CD4-positive, alpha-beta memory T cell (primary cell): ENCODE measurements at regions of chr11 and their contacts with region 1.

Region 1: GRCh38 chr11:6377902-6378639 is 12.2 kb upstream of the SMPD1 start:
- DNase-seq: no peak
- H3K4me3 ChIP-seq: no peak overlapping the region
- H3K4me3 Mint-ChIP-seq: peak overlapping the region in 5 of 8 donors; percentile 22 to 68 (median 60)
- H3K27ac ChIP-seq: no peak overlapping the region
- H3K27ac Mint-ChIP-seq: peak overlapping the region; percentile 28 to 90 (median 79)
- H3K4me1 ChIP-seq: peaks cover 17% of the 10 kb centered on the region
- H3K4me1 Mint-ChIP-seq: peaks cover 14 to 29% (median 23%) of the 10 kb centered on the region in 4 donors
- H3K27me3 ChIP-seq: no peaks in the 10 kb centered on the region
- H3K27me3 Mint-ChIP-seq: no peaks in the 10 kb centered on the region

Region 2: DNA sequence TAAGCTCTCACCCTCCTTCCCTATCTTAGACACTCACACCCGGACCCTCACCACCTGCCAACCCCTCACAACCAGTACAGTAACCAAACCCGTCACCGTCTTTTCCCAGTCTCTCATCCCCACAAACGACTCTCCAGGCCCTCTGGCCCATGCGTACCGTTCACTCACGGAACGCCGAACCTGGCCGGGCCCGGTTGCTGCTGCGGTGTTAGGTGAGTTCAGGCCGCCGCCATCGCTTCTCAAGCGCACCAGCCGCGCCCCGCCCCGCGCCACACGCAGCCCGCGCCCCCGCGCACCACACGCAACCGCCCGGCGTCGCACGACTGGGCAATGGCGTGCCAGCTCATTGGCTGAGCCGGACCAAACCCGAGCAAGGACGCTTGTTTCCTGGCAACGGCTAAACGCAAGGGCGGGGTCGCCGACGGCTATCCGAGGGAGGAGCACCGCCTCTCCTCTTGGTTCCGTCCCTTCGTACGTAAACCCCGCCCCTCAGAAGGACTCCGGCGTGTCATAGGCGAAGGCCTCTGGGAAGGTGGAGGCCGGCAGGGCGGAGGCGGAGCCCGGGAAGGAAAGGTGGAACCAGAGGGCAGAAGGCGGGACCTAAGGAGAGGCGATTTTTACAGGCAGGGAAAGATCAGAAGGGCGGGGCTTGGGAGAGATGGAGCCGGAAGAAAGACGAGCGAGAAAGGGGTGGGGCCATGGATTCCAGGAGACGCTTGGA is 143.5 kb before region 1 on chr11 and contains the start of gene FHIP1B:
- CTCF ChIA-PET with region 1: no interaction called
- POLR2A ChIA-PET with region 1: no interaction called
- intact Hi-C with region 1: no loop called
- DNase-seq: peak; percentile 99 to 100 (median 100)
- H3K4me3 ChIP-seq: peak within 1 kb of the TSS; percentile 80 to 86
- H3K4me3 Mint-ChIP-seq: peak within 1 kb of the TSS; percentile 96 to 100 (median 98)
- H3K27ac ChIP-seq: peak within 1 kb of the TSS; percentile 75
- H3K27ac Mint-ChIP-seq: peak within 1 kb of the TSS; percentile 87 to 100 (median 99)
- H3K4me1 ChIP-seq: peaks cover 32% of the 10 kb centered on the region
- H3K4me1 Mint-ChIP-seq: peaks cover 27 to 51% (median 42%) of the 10 kb centered on the region in 4 donors
- H3K27me3 ChIP-seq: no peaks in the 10 kb centered on the region
- H3K27me3 Mint-ChIP-seq: peaks cover 0 to 2% of the 10 kb centered on the region in 2 donors
- total RNA-seq, gene FHIP1B: 48.7 to 50.8 TPM

Region 3: GRCh38 chr11:6269994-6270393 is 108.1 kb before region 1 on chr11:
- CTCF ChIA-PET with region 1: no interaction called
- POLR2A ChIA-PET with region 1: no interaction called
- intact Hi-C with region 1: no loop called
- DNase-seq: no peak
- H3K4me3 ChIP-seq: no peak overlapping the region
- H3K4me3 Mint-ChIP-seq: no peak overlapping the region
- H3K27ac ChIP-seq: no peak overlapping the region
- H3K27ac Mint-ChIP-seq: no peak overlapping the region
- H3K4me1 ChIP-seq: no peaks in the 10 kb centered on the region
- H3K4me1 Mint-ChIP-seq: no peaks in the 10 kb centered on the region
- H3K27me3 ChIP-seq: no peaks in the 10 kb centered on the region
- H3K27me3 Mint-ChIP-seq: peaks cover 25 to 26% of the 10 kb centered on the region in 2 donors

Region 4: DNA sequence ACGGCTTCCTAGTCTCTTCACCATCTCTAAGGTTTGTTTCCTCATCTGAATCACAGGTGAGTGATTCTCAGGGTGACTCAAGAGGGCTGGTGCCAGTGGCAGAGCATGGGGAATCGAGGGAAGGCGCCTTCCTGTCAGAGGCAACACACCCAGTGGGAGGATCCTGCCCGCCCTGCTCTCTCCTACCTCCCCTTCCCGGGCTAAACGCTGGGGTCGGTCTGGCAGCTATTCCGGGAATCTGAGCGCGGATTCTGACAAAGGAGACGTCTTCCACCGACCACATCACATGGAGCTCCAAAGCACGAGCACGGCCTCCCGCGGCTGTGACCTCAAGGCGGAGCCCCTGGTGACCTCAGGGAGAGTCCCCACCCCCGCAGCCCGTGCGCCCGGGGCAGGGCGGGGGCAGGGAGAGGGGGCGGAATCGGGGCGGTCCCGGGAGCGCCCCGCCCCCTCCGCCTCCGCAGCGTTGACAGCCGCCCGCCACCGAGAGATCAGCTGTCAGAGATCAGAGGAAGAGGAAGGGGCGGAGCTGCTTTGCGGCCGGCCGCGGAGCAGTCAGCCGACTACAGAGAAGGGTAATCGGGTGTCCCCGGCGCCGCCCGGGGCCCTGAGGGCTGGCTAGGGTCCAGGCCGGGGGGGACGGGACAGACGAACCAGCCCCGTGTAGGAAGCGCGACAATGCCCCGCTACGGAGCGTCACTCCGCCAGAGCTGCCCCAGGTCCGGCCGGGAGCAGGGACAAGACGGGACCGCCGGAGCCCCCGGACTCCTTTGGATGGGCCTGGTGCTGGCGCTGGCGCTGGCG is 12.1 kb after region 1 on chr11 and contains the start of gene SMPD1:
- CTCF ChIA-PET with region 1: interaction called, 61 read pairs
- POLR2A ChIA-PET with region 1: interaction called, 18 read pairs
- intact Hi-C with region 1: no loop called
- DNase-seq: peak; percentile 91 to 96 (median 92)
- H3K4me3 ChIP-seq: peak within 1 kb of the TSS; percentile 79 to 97
- H3K4me3 Mint-ChIP-seq: peak within 1 kb of the TSS; percentile 93 to 98 (median 95)
- H3K27ac ChIP-seq: peak within 1 kb of the TSS; percentile 83
- H3K27ac Mint-ChIP-seq: peak within 1 kb of the TSS; percentile 98 to 100 (median 99)
- H3K4me1 ChIP-seq: peaks cover 50% of the 10 kb centered on the region
- H3K4me1 Mint-ChIP-seq: peaks cover 24 to 61% (median 44%) of the 10 kb centered on the region in 4 donors
- H3K27me3 ChIP-seq: no peaks in the 10 kb centered on the region
- H3K27me3 Mint-ChIP-seq: no peaks in the 10 kb centered on the region
- total RNA-seq, gene SMPD1: 39.3 to 43.6 TPM

Region 5: GRCh38 chr11:6431861-6432260 is 53.8 kb after region 1 on chr11:
- CTCF ChIA-PET with region 1: interaction called, 1,014 read pairs
- POLR2A ChIA-PET with region 1: interaction called, 6 read pairs
- intact Hi-C with region 1: no loop called
- DNase-seq: no peak
- H3K4me3 ChIP-seq: no peak overlapping the region
- H3K4me3 Mint-ChIP-seq: no peak overlapping the region
- H3K27ac ChIP-seq: no peak overlapping the region
- H3K27ac Mint-ChIP-seq: no peak overlapping the region
- H3K4me1 ChIP-seq: peaks cover under 1% of the 10 kb centered on the region
- H3K4me1 Mint-ChIP-seq: no peaks in the 10 kb centered on the region
- H3K27me3 ChIP-seq: no peaks in the 10 kb centered on the region
- H3K27me3 Mint-ChIP-seq: no peaks in the 10 kb centered on the region

Region 6: GRCh38 chr11:6473481-6474422 is 95.7 kb after region 1 on chr11 and contains the start of gene TRIM3:
- CTCF ChIA-PET with region 1: interaction called, 14 read pairs
- POLR2A ChIA-PET with region 1: interaction called, 5 read pairs
- intact Hi-C with region 1: no loop called
- DNase-seq: peak; percentile 41 to 75 (median 53)
- H3K4me3 ChIP-seq: peak within 1 kb of the TSS; percentile 54 to 64
- H3K4me3 Mint-ChIP-seq: peak within 1 kb of the TSS; percentile 88 to 92 (median 89)
- H3K27ac ChIP-seq: peak within 1 kb of the TSS; percentile 60
- H3K27ac Mint-ChIP-seq: peak within 1 kb of the TSS; percentile 86 to 95 (median 92)
- H3K4me1 ChIP-seq: peaks cover 16% of the 10 kb centered on the region
- H3K4me1 Mint-ChIP-seq: peaks cover 10 to 33% (median 19%) of the 10 kb centered on the region in 4 donors
- H3K27me3 ChIP-seq: no peaks in the 10 kb centered on the region
- H3K27me3 Mint-ChIP-seq: no peaks in the 10 kb centered on the region
- total RNA-seq, gene TRIM3: 22.9 to 23.1 TPM

Region 7: DNA sequence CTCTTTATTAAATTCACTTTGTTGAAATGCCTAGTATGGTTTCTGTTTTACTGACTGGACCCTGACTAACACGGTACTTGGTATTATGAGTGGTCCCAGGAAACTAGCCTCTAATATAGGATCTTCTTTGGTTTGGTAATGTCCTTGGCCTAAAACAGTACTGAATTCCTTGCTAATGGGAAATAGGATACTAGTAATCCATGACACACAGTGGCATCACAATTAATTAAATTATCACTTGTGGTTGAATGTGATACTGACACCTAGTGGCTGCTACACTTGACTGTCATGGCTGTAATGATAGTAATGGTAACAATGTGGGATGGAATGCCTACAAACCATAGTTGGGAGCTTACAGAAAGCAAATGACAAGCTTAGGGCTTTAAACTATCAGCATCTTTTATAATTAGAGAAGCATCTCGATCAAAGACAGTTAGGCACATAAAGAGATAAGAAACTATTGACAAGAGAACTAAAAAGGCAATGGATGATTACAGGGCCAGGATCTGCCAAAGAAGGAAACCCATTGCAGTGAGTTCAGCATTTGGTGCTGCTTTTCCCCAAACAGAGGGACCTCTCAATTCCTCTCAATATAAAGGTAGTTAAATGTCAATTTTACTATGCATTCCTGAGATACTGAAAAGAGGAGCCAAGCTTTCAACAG is 127.6 kb after region 1 on chr11:
- CTCF ChIA-PET with region 1: interaction called, 161 read pairs
- POLR2A ChIA-PET with region 1: interaction called, 7 read pairs
- intact Hi-C with region 1: loop called (anchors 1 kb)
- DNase-seq: peak; percentile 17 to 41 (median 27)
- H3K4me3 ChIP-seq: no peak overlapping the region
- H3K4me3 Mint-ChIP-seq: no peak overlapping the region
- H3K27ac ChIP-seq: no peak overlapping the region
- H3K27ac Mint-ChIP-seq: no peak overlapping the region
- H3K4me1 ChIP-seq: no peaks in the 10 kb centered on the region
- H3K4me1 Mint-ChIP-seq: peaks cover 0 to 5% (median 0%) of the 10 kb centered on the region in 4 donors
- H3K27me3 ChIP-seq: no peaks in the 10 kb centered on the region
- H3K27me3 Mint-ChIP-seq: no peaks in the 10 kb centered on the region

Region 8: DNA sequence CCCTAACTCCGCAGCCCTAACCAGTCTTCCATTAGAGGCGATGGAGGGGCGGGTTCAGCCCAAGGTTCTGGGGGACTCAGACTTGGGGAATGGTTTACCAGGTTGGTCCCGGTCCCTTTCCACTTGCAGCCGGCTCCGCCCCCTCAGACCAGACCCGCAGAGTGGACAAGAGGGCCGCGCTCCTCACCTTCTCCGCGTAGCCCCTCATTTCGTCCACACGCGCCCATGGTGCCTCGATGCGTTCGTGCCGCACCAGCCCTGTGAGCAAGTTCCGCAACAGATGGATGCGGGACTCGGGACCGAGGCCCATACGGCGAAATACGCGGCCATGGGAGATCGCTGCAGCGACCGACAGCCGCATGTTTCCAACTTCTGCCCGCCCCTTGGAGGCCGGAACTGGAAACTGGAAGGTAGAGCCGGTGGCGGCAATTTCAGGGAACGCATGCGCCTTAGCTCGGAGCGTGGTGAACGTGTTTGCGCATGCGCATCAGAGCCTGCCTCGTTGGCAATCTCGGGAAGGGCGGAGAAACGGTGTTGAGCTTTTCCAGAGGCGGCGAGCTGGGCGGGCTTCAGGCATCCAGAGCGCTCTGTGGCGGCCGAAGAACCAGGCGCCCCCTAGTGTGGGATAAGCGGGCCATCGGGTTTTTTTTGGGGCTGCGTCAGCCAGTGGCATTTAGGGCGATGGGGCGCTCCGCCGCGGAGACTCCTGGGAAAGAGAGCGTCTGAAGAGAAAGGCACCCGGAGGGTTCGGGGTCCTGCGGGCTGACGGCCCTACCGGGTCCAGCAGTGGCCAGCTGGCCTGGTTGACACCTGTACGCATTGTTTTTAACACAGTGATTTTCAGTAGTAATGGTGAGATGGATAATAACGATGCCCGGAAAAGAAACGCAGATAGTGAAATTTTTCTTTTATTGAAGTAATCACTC is 305.1 kb after region 1 on chr11 and contains the start of gene MRPL17:
- CTCF ChIA-PET with region 1: interaction called, 21 read pairs
- POLR2A ChIA-PET with region 1: interaction called, 3 read pairs
- intact Hi-C with region 1: loop called (anchors 1 kb)
- DNase-seq: peak; percentile 99 to 100 (median 100)
- H3K4me3 ChIP-seq: peak within 1 kb of the TSS; percentile 82 to 99
- H3K4me3 Mint-ChIP-seq: peak within 1 kb of the TSS; percentile 97 to 99 (median 98)
- H3K27ac ChIP-seq: peak within 1 kb of the TSS; percentile 81
- H3K27ac Mint-ChIP-seq: peak within 1 kb of the TSS; percentile 95 to 100 (median 99)
- H3K4me1 ChIP-seq: peaks cover 26% of the 10 kb centered on the region
- H3K4me1 Mint-ChIP-seq: peaks cover 19 to 46% (median 25%) of the 10 kb centered on the region in 4 donors
- H3K27me3 ChIP-seq: no peaks in the 10 kb centered on the region
- H3K27me3 Mint-ChIP-seq: no peaks in the 10 kb centered on the region
- total RNA-seq, gene MRPL17: 33.4 to 36.9 TPM